Psoas muscle (tissue), 8 donors: ENCODE measurements at regions of chr10 and their contacts with region 1.

Region 1: GRCh38 chr10:101042667-101043355 is 11.8 kb downstream of the SFXN3 start:
- DNase-seq: peak; percentile 97
- ATAC-seq: peak; percentile 92 to 95 (median 92)
- H3K4me3 ChIP-seq: peak overlapping the region; percentile 71
- H3K27ac ChIP-seq: peak overlapping the region; percentile 76
- H3K4me1 ChIP-seq: peaks cover 10% of the 10 kb centered on the region
- H3K27me3 ChIP-seq: peaks cover 0 to 17% (median under 1%) of the 10 kb centered on the region in 3 donors
- CTCF ChIP-seq: no peak

Region 2: GRCh38 chr10:101060036-101060950 is 17.5 kb after region 1 on chr10:
- intact Hi-C with region 1: loop called (anchors 2 kb)
- DNase-seq: peak; percentile 93 to 96
- ATAC-seq: peak; percentile 74 to 89 (median 78)
- H3K4me3 ChIP-seq: peak overlapping the region; percentile 97
- H3K27ac ChIP-seq: peak overlapping the region; percentile 99
- H3K4me1 ChIP-seq: peaks cover 25% of the 10 kb centered on the region
- H3K27me3 ChIP-seq: peaks cover 0 to 22% (median 0%) of the 10 kb centered on the region in 3 donors
- CTCF ChIP-seq: peak; percentile 92

Region 3: DNA sequence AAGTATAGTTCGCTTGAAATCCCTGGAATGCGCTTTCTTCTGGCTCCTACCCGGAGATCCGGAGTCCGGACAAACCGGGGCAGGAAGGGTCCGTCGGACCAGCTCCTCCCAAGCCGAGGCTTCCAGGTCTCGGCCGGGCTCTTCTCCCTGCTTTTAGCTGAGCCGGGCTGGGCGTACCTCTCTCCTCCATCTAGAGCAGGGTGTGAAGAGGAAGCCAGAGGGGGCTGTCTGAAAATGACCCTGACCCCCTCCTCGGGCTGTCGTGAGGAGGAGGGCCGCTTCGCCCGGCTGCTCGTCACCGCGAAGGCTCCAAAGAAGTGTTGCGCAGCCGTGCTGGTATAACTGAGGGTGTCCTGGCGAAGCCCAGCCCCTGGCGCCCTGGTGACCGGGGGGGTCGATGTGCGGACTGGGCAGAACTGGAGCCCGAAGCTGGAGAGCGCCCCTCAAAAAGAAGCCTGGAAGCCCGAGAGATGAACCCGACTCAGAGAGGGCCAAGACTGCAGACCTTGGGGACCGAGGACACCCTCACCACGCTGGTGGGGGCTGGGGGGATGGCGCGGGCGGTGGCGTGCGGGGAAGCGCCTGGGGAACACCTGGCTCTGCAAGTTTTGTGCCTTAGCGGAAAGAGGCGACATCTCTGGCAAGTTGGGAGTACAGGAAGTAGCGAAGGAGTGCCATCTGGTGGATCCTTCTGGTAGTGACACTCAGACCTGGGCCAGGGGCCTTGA is 24.7 kb after region 1 on chr10:
- intact Hi-C with region 1: loop called (anchors 2 to 5 kb)
- DNase-seq: peak; percentile 64 to 77
- ATAC-seq: peak; percentile 70 to 89 (median 83)
- H3K4me3 ChIP-seq: peak overlapping the region; percentile 64
- H3K27ac ChIP-seq: no peak overlapping the region
- H3K4me1 ChIP-seq: peaks cover 30% of the 10 kb centered on the region
- H3K27me3 ChIP-seq: peaks cover 0 to 55% (median 4%) of the 10 kb centered on the region in 3 donors
- CTCF ChIP-seq: peak; percentile 94

Region 4: DNA sequence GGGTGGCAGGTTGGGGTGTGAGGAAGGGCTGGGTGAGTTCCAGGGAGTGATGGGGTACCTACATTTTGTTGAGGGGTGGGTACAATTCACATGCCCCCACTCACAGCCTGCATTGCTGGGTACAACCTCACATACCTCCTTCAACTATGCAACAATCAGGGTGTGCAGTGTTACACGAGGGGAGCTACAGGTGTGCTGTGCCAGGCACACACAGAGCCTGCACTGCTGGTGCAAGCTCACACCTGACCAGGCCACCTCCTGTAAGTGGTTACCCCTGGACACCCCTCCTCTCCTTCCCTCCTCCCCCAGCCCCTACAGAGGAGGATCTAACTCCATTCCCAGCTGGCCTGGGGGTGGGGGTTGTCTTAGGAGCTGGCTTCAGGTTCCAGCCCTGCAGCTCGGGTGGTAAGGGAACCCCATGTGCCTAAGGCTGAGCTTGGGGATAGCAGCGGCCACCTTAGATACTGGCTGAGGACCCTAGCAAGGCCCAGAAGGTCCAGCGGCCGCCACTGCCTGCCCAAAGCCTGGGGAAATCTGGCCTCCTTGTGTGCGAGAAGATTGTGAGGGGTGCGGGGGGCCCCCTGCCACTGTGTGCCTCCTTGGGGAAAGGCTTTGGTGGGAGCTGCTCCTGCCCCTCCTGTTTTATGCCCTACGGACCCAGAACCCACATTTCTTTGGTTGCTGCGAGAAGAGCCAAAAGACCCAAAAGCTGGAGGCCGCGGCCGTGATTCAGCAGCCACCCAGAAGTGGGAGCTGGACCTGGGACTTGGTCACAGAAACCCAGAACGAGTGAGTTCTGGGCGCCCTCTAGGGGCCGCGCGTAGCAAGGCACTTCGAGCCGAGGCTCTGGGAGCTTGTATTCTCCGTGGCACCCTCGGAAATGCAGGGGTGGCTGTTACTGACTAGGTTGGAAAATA is 99.1 kb after region 1 on chr10:
- intact Hi-C with region 1: loop called in 1 of 2 experiments (anchors 5 kb)
- DNase-seq: peak; percentile 78 to 89
- ATAC-seq: peak; percentile 88 to 95 (median 92)
- H3K4me3 ChIP-seq: no peak overlapping the region
- H3K27ac ChIP-seq: no peak overlapping the region
- H3K4me1 ChIP-seq: peaks cover 17% of the 10 kb centered on the region
- H3K27me3 ChIP-seq: peaks cover 0 to 96% (median 46%) of the 10 kb centered on the region in 3 donors
- CTCF ChIP-seq: peak; percentile 96

Region 5: GRCh38 chr10:101238732-101239105 is 195.9 kb after region 1 on chr10:
- intact Hi-C with region 1: no loop called
- DNase-seq: no peak
- ATAC-seq: no peak
- H3K4me3 ChIP-seq: no peak overlapping the region
- H3K27ac ChIP-seq: no peak overlapping the region
- H3K4me1 ChIP-seq: peaks cover 25% of the 10 kb centered on the region
- H3K27me3 ChIP-seq: peaks cover 0 to 26% (median 1%) of the 10 kb centered on the region in 3 donors
- CTCF ChIP-seq: no peak